ENCODE measurements at regions of chr22 and their contacts with region 1.

Region 1: GRCh38 chr22:24601217-24602104 is 1.5 kb upstream of the GGT1 start:
- DNase-seq: no peak
- H3K4me3 ChIP-seq: no peak overlapping the region
- H3K4me3 Mint-ChIP-seq: no peak overlapping the region
- H3K27ac ChIP-seq: no peak overlapping the region
- H3K27ac Mint-ChIP-seq: peak overlapping the region in 1 of 7 donors; percentile 37
- H3K4me1 ChIP-seq: peaks cover 8% of the 10 kb centered on the region
- H3K4me1 Mint-ChIP-seq: peaks cover 8 to 34% (median 24%) of the 10 kb centered on the region in 4 donors
- H3K27me3 ChIP-seq: no peaks in the 10 kb centered on the region
- H3K27me3 Mint-ChIP-seq: no peaks in the 10 kb centered on the region

Region 2: DNA sequence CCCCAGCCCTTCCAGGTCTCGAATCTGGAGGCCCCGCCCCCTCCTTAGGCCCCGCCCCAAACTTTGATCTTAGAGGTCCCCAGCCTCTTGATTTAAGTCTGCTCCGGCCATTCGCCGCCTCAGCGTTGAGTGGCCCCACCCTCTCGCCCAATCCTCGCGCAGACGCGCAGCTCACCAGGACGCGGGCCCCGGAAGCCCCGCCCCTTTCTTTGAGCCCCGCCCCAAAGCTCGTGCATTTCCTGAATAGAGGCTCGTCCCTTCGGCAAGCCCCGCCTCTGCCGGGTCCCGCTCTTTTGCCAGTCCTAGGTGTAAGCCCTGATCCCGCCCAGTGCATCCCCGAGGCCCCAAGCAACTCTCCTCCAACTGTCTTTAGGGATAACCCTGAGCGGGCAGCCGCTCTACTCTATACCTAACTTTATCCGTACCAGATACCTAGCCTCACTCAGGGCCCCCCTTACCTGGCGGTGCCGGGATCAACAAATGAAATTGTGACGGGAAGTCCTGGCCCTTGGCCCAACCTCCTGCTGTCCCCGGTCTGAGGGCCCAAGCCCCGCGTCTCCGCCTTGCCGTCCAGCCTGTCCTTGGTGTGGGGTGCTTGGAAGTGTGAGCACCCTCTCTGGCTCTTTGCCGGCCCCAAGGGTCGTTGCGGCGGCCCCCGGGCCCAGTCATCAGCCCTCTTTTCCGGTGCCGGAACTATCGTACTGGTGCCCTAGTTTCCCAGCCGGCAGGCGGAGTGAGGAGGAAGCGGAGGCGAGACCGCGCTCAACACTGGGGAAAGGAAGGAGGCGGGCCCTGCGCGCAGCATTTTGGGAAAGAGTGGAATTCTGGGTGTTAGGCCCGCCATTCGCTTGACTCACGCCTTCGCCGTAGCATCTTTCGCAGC is 46.1 kb before region 1 on chr22 and contains the start of gene SNRPD3:
- CTCF ChIA-PET with region 1: no interaction called
- POLR2A ChIA-PET with region 1: no interaction called
- intact Hi-C with region 1: loop called (anchors 5 kb)
- DNase-seq: peak; percentile 96 to 100 (median 98)
- H3K4me3 ChIP-seq: peak within 1 kb of the TSS; percentile 76 to 100
- H3K4me3 Mint-ChIP-seq: peak within 1 kb of the TSS; percentile 97 to 99 (median 98)
- H3K27ac ChIP-seq: peak within 1 kb of the TSS; percentile 87
- H3K27ac Mint-ChIP-seq: peak within 1 kb of the TSS; percentile 95 to 99 (median 99)
- H3K4me1 ChIP-seq: peaks cover 52% of the 10 kb centered on the region
- H3K4me1 Mint-ChIP-seq: peaks cover 48 to 72% (median 59%) of the 10 kb centered on the region in 4 donors
- H3K27me3 ChIP-seq: no peaks in the 10 kb centered on the region
- H3K27me3 Mint-ChIP-seq: no peaks in the 10 kb centered on the region
- total RNA-seq, gene SNRPD3: 77.6 to 85.0 TPM